ENCODE measurements at regions of chr1 and their contacts with region 1.

Region 1: DNA sequence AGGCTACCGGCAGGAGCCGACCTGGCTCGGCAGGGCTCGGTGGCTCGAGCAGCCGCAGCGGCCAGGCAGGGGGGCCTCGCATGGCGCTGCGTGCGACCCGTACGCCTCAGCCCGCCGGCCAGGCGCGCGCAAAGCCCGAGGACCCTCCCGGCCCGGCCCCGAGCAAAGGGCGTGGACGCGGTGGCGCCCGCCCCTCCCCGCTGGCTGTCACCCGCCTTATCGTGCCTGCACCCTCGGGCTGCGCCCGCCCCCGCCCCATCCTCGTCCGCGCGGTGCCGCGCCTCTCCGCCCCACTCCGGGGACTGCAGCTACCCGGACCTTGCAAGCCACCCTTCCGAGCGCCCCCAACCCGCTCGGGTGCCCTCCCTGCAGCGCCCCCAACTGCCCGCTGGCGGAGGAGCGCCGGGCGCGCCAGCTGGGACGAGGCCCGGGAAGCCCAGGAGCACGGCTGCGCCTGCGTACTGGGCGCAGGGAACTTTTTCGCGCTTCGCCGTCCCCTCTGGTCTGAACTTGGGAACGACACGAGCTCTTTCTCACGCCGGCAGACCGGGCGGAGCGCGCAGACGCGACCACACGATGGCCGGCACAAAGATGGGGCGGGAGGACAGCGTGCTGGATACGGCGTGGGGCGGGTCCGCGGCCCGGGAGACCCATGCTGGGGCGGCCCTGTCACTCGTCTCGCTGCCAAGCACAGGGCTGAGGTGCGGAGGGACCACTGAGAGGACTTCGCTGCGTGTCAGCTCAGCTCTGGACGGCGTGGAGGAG is at the start of gene ABCB10:
- DNase-seq: peak; percentile 96 to 98 (median 96)
- H3K4me3 ChIP-seq: peak within 1 kb of the TSS in 3 of 4 donors; percentile 12 to 92 (median 90)
- H3K27ac ChIP-seq: peak within 1 kb of the TSS; percentile 46 to 95 (median 74)
- H3K4me1 ChIP-seq: peaks cover 0 to 25% of the 10 kb centered on the region in 2 donors
- H3K27me3 ChIP-seq: no peaks in the 10 kb centered on the region
- CTCF ChIP-seq: peak; percentile 50 to 87 (median 70)
- POLR2A ChIP-seq: peak in 1 of 2 donors; percentile 54
- total RNA-seq, gene ABCB10: 9.4 to 15.0 (median 12.9) TPM

Region 2: DNA sequence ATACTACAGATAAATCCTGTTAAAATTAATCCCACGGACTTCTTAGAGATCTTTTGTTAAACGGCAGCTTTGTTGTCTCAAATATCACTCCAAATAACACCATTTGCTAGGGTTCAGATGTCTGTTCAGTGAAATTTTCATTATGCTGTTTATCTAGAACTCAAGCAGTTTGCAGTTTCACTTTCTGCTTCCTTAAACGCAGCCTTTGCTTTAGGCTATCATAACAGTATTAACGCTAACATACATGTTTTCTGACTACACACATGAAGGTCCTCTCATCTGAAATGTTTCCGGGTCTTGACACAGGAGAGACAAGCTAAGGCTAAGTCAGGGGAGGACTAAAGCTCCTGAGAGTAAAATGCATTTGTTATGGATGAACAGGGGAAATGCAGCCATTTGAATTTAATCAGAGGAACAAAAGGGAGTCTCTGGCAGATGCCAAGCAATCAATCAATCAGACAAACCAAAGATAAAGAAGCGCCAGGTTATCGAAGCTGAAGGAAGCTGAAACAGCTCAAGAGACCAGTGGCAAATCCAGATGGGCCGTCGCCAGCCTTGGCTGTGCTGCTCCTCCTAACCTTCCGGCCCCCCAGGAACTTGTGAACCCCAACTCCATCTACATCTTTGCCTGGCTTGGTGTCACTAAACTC is 232.8 kb before region 1 on chr1:
- intact Hi-C with region 1: no loop called
- DNase-seq: no peak
- H3K4me3 ChIP-seq: peak overlapping the region in 1 of 4 donors; percentile 4
- H3K27ac ChIP-seq: peak overlapping the region in 1 of 5 donors; percentile 39
- H3K4me1 ChIP-seq: peaks cover 0 to 10% of the 10 kb centered on the region in 2 donors
- H3K27me3 ChIP-seq: no peaks in the 10 kb centered on the region
- CTCF ChIP-seq: no peak
- POLR2A ChIP-seq: no peak

Region 3: DNA sequence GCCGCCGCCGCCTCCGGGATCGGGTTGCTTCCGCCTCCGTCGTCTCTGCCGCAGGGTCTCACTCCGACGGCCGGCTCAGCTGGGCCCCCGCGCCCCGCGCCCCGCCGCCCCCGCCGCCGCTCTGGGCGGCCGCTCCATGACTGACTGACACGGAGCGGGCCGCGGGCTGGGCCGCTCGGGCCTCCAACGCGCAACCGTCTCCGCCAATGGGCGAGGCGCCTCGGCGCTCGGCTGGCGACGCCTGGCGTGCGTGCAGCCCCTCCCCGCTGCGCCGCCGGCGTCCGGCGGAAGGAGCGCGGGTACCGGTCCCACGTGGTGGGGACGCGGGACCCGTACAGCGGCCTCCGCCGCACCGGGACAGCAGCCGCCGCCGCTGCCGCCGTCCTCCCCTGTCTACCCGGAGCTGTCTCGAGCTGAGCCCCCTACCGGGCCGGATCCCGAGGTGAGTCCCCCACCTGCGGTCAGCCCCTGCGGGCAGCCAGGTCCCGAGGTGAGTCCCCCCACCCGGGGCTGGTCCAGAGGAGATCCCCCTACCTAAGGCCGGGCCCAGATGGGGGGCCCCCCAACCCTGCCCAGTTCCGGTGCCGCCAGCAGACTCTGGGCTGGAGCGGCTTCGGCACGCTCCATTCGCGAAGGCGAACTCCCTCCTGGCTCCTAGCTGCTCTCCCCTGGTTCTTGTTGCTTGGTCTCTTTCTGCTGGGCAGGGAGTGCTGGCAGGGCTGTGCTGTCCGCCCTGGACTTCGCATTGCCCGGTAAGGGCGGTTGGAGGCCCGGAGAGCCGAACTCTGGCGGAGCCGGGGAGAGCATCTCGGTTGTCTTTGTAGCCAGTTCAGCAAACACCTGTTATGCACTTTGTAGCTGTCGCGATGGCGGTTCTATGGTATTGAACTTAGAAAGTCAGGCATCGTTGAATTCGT is 67.4 kb after region 1 on chr1 and contains the starts of genes TAF5L and URB2:
- intact Hi-C with region 1: loop called (anchors 5 to 10 kb)
- DNase-seq: peak; percentile 84 to 91 (median 88)
- H3K4me3 ChIP-seq: peak within 1 kb of the TSS; percentile 67 to 100 (median 94)
- H3K27ac ChIP-seq: peak within 1 kb of the TSS; percentile 44 to 98 (median 79)
- H3K4me1 ChIP-seq: peaks cover 13 to 39% of the 10 kb centered on the region in 2 donors
- H3K27me3 ChIP-seq: no peaks in the 10 kb centered on the region
- CTCF ChIP-seq: no peak
- POLR2A ChIP-seq: peak in 1 of 2 donors; percentile 63
- total RNA-seq, gene TAF5L: 7.8 to 16.0 (median 10.1) TPM
- total RNA-seq, gene URB2: 4.4 to 10.8 (median 7.8) TPM

Measured in adrenal gland (tissue), 19 donors.